OCI-LY7 (cell line): ENCODE measurements at regions of chr17 and their contacts with region 1.

Region 1: DNA sequence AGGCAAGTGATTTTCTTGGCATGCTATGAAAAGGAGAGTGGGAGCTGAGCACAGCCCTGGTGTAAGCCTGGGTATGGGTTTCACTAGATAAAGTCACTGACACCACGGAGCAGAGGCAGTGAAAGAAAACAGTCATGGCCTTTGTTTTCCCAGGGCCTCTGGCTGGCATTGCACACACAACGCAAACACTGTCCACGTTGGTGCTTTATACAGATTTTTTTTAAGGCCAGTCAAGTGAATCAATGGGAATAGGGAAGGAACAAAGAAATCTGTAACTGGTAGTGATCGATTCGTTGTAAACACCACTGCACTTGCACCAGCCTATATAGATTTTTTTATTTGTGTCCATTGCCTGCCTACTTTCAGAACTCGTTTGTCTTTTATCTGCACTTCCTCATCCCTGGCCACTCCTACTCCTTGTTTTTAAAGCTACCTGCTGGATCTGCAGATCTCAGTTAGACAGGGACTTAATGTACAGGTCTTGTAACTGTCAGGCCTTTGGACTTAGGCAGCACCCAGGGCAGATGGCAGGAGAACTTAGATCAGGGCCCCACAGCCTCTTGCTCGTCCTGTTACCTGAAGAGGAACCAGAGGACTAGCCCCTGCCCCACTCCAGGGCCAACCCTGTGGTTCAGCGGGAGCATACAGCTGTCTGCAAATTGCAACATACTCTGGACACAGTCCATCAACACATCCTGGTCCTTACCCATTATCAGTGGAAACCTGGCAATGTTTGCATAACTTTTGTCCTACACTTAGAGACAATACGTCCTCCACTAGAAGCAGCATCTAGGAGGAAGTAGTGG is 10.6 kb upstream of the TMIGD1 start:
- DNase-seq: no peak
- H3K4me3 ChIP-seq: no peak overlapping the region
- H3K27ac ChIP-seq: no peak overlapping the region
- H3K4me1 ChIP-seq: no peaks in the 10 kb centered on the region
- CTCF ChIP-seq: no peak

Region 2: GRCh38 chr17:30477083-30477773 is 132.7 kb after region 1 on chr17 and contains the start of gene GOSR1:
- CTCF ChIA-PET with region 1: no interaction called
- POLR2A ChIA-PET with region 1: no interaction called
- intact Hi-C with region 1: loop called (anchors 5 kb)
- DNase-seq: peak; percentile 96
- H3K4me3 ChIP-seq: peak within 1 kb of the TSS; percentile 88
- H3K27ac ChIP-seq: peak within 1 kb of the TSS; percentile 42
- H3K4me1 ChIP-seq: peaks cover 17% of the 10 kb centered on the region
- CTCF ChIP-seq: peak; percentile 84
- total RNA-seq, gene GOSR1: 15.9 and 17.0 TPM in 2 replicates

Region 3: GRCh38 chr17:30554839-30555751 is 210.6 kb after region 1 on chr17:
- CTCF ChIA-PET with region 1: no interaction called
- POLR2A ChIA-PET with region 1: no interaction called
- intact Hi-C with region 1: loop called (anchors 10 kb)
- DNase-seq: peak; percentile 33
- H3K4me3 ChIP-seq: no peak overlapping the region
- H3K27ac ChIP-seq: no peak overlapping the region
- H3K4me1 ChIP-seq: peaks cover 9% of the 10 kb centered on the region
- CTCF ChIP-seq: peak; percentile 64

Region 4: GRCh38 chr17:30716461-30717300 is 372.2 kb after region 1 on chr17:
- CTCF ChIA-PET with region 1: no interaction called
- POLR2A ChIA-PET with region 1: no interaction called
- intact Hi-C with region 1: loop called (anchors 5 kb)
- DNase-seq: peak; percentile 50
- H3K4me3 ChIP-seq: no peak overlapping the region
- H3K27ac ChIP-seq: no peak overlapping the region
- H3K4me1 ChIP-seq: peaks cover 38% of the 10 kb centered on the region
- CTCF ChIP-seq: peak; percentile 70

Region 5: GRCh38 chr17:30824356-30825145 is 480.1 kb after region 1 on chr17 and contains the start of gene CRLF3:
- CTCF ChIA-PET with region 1: no interaction called
- POLR2A ChIA-PET with region 1: no interaction called
- intact Hi-C with region 1: loop called (anchors 2 kb)
- DNase-seq: peak; percentile 95
- H3K4me3 ChIP-seq: peak within 1 kb of the TSS; percentile 80
- H3K27ac ChIP-seq: peak within 1 kb of the TSS; percentile 85
- H3K4me1 ChIP-seq: peaks cover 44% of the 10 kb centered on the region
- CTCF ChIP-seq: peak; percentile 78
- total RNA-seq, gene CRLF3: 26.4 and 29.4 TPM in 2 replicates